PC-3 (cell line): ENCODE measurements at regions of chr14 and their contacts with region 1.

Region 1: GRCh38 chr14:32588448-32589320 is 259.6 kb downstream of the AKAP6 start:
- DNase-seq: peak; percentile 77
- ATAC-seq: peak; percentile 83
- H3K4me3 ChIP-seq: no peak overlapping the region
- H3K27ac ChIP-seq: no peak overlapping the region
- H3K4me1 ChIP-seq: peaks cover 10% of the 10 kb centered on the region
- H3K27me3 ChIP-seq: no peaks in the 10 kb centered on the region
- CTCF ChIP-seq: peak; percentile 97

Region 2: GRCh38 chr14:32826404-32827082 is 237.9 kb after region 1 on chr14:
- CTCF ChIA-PET with region 1: no interaction called
- POLR2A ChIA-PET with region 1: no interaction called
- intact Hi-C with region 1: loop called (anchors 5 kb)
- DNase-seq: peak; percentile 30
- ATAC-seq: no peak
- H3K4me3 ChIP-seq: no peak overlapping the region
- H3K27ac ChIP-seq: no peak overlapping the region
- H3K4me1 ChIP-seq: peaks cover 30% of the 10 kb centered on the region
- H3K27me3 ChIP-seq: no peaks in the 10 kb centered on the region
- CTCF ChIP-seq: peak; percentile 28; the same call in 1 of the 2 replicates

Region 3: DNA sequence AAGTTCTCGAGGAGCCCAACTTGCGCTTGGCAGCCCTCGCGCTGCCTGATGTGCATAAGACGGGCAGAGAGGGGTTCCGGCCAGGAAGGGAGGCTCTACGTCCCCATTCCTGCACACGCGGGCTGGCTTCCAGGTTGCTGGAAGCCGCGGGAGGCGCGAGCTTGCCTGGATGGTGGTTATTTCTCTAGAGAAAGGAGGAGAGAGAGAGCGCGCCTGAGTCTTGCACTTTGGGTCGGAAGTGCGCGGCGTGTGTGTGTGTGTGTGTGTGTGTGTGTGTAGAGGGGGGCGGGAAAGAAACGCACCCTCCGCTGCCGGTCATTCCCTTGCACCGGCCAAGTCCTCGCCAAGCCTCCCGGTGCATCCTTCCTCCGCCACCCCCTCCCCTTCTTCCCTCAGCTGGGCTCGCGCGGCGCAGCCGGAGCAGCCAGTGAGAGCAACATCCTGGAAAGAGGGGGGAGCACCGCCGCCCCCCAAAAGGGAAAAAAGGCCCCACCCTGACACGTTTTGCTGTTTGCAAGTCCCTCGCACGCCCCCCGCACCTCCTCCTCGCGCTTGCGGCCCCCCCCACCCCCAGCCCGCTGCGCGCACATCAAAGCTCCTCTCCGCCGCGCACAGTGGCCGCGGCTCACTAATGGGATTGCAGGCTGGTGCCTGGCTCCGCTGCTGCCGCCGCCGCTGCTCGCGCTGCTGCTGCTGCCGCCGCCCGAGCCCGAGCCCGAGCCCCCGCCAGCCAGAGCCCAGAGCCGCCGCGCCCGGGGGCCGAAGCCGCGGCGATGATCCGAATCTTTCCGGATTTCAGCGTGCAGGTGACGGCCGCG is 345.6 kb after region 1 on chr14:
- CTCF ChIA-PET with region 1: interaction called, 15 read pairs
- POLR2A ChIA-PET with region 1: interaction called, 5 read pairs
- intact Hi-C with region 1: loop called (anchors 5 kb)
- DNase-seq: peak; percentile 20
- ATAC-seq: peak; percentile 37
- H3K4me3 ChIP-seq: peak overlapping the region; percentile 73
- H3K27ac ChIP-seq: no peak overlapping the region
- H3K4me1 ChIP-seq: 0 out of 2 replicates have a peak, but pooled peaks cover 4% of the 10 kb centered on the region
- H3K27me3 ChIP-seq: peaks cover 50% of the 10 kb centered on the region
- CTCF ChIP-seq: no peak

Region 4: DNA sequence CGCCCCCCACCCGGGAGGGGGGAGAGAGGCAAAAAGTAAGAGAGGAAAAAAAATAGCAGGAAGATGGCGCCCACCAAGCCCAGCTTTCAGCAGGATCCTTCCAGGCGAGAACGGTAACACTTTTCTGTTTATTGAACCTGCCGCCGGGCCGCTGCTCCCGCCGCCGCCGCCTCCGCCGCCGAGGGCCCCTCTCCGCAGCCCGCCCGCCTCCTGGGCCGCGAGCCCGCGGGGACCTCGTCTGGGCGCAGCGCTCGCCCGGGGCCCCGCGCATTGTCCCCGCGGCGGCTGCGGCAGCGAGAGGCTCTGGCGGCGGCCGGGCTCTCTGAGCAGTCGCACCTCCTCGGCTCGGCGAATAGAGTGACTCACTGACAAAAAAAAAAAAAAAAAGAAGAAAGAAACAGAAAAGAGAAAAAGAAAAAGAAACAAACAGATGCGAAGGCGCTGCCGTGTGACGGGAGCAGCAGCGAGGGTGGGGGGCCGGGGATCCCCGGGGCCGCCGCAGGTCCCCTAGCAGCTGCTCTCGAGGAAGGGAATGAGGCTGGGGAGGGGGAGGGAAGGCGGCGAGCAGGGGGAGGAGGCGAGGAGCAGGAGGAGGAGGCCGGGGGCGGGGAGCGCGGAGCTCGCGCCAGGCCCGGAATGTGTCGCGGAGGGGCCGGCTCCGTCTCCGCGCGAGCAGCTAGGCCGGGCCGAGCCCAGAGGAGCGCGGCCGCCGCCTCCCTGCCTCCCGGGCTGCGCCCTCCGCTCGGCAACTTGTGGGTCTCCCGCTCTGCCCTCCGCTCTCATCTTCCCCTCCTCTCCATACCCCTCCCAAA is 350.8 kb after region 1 on chr14:
- CTCF ChIA-PET with region 1: interaction called, 15 read pairs
- POLR2A ChIA-PET with region 1: interaction called, 5 read pairs
- intact Hi-C with region 1: loop called (anchors 5 kb)
- DNase-seq: peak; percentile 63
- ATAC-seq: peak; percentile 61
- H3K4me3 ChIP-seq: peak overlapping the region; percentile 64
- H3K27ac ChIP-seq: no peak overlapping the region
- H3K4me1 ChIP-seq: peaks cover 14% of the 10 kb centered on the region; the same call in 1 of the 2 replicates
- H3K27me3 ChIP-seq: peaks cover 29% of the 10 kb centered on the region
- CTCF ChIP-seq: no peak

Region 5: GRCh38 chr14:32998433-32998832 is 409.7 kb after region 1 on chr14:
- CTCF ChIA-PET with region 1: no interaction called
- POLR2A ChIA-PET with region 1: no interaction called
- intact Hi-C with region 1: loop called (anchors 1 kb)
- DNase-seq: peak; percentile 43
- ATAC-seq: peak; percentile 57
- H3K4me3 ChIP-seq: no peak overlapping the region
- H3K27ac ChIP-seq: no peak overlapping the region
- H3K4me1 ChIP-seq: no peaks in the 10 kb centered on the region
- H3K27me3 ChIP-seq: no peaks in the 10 kb centered on the region
- CTCF ChIP-seq: peak; percentile 61

Region 6: DNA sequence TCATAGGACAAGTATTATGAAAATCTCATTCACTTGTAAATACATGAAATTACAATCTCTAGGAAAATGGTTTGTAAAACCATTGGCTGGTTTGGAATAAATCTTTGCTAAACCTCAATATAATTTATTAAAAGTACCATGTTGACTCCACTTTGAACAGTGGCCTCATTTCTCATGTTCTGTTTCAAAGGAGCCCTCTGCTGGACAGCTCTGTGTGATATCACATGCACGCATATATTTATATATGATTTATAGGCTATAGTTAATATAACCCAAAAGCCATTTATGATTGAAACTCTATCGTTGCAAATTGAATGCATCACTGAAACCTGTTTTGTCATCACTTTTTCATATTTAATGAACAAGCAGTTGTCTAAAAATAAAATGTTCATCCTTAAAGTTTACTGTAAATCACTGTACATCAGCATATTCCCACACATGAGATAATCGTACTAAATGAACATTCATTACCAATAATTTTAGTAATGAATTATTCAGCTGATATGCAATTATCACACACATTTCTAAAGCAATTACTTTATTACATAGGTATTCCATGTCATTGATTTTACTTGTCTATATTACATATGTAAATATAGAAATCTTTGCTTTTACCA is 843.8 kb after region 1 on chr14:
- CTCF ChIA-PET with region 1: no interaction called
- POLR2A ChIA-PET with region 1: no interaction called
- intact Hi-C with region 1: loop called (anchors 1 kb)
- DNase-seq: peak; percentile 71
- ATAC-seq: peak; percentile 54
- H3K4me3 ChIP-seq: no peak overlapping the region
- H3K27ac ChIP-seq: no peak overlapping the region
- H3K4me1 ChIP-seq: peaks cover 12% of the 10 kb centered on the region
- H3K27me3 ChIP-seq: no peaks in the 10 kb centered on the region
- CTCF ChIP-seq: peak; percentile 82